Activated CD4-positive, alpha-beta T cell treated with anti-CD3 and anti-CD28 coated beads for 36 hours (primary cell): ENCODE measurements at regions of chr6 and their contacts with region 1.

Region 1: GRCh38 chr6:26322645-26323482 is 42.1 kb upstream of the BTN3A2 start:
- DNase-seq: peak; percentile 77
- ATAC-seq: peak; percentile 66
- H3K4me3 Mint-ChIP-seq: peak overlapping the region; percentile 84
- H3K27ac Mint-ChIP-seq: peak overlapping the region; percentile 93
- H3K4me1 Mint-ChIP-seq: peaks cover 28% of the 10 kb centered on the region
- H3K27me3 Mint-ChIP-seq: peaks cover 5% of the 10 kb centered on the region

Region 2: GRCh38 chr6:25717866-25718740 is 604.8 kb before region 1 on chr6:
- CTCF ChIA-PET with region 1: no interaction called
- POLR2A ChIA-PET with region 1: no interaction called
- intact Hi-C with region 1: no loop called
- DNase-seq: no peak
- ATAC-seq: no peak
- H3K4me3 Mint-ChIP-seq: no peak overlapping the region
- H3K27ac Mint-ChIP-seq: no peak overlapping the region
- H3K4me1 Mint-ChIP-seq: peaks cover 3% of the 10 kb centered on the region
- H3K27me3 Mint-ChIP-seq: peaks cover 13% of the 10 kb centered on the region

Region 3: DNA sequence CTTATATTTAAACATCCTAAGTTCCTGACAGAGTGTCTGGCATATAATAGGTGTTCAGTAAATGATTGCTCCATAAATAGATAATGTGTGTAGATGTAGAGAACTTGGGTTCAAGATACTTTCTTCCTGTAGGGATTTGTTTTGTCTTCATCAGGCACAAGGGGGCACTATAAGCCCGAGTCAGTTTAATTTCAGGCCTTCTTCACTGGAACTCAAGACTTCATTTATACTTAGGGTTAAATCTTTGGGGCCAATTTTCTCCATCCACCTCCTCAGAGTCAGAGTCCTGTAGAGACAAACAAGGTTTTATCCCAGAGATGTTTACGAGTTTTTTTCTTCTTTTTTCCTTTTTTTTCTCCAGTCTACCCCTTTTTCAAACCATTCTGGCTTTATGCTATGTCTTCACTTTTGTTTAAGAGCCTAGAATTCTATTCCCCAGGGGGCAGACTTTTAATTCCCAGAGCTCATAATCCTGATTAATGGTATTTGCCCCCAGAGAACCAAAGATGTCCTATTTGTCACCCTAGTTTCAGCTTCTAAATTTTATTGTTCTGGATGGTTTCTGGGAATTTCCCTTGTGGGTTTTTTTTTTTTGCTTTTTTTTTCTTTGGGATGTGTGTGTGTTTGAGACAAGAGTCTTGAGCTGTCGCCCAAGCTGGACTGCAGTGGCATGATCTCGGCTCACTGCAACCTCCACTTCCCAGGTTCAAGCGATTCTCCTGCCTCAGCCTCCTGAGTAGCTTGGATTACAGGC is 147.3 kb before region 1 on chr6:
- CTCF ChIA-PET with region 1: interaction called, 3 read pairs
- POLR2A ChIA-PET with region 1: no interaction called
- intact Hi-C with region 1: loop called (anchors 5 kb)
- DNase-seq: peak; percentile 69
- ATAC-seq: peak; percentile 14
- H3K4me3 Mint-ChIP-seq: peak overlapping the region; percentile 30
- H3K27ac Mint-ChIP-seq: peak overlapping the region; percentile 80
- H3K4me1 Mint-ChIP-seq: peaks cover 33% of the 10 kb centered on the region
- H3K27me3 Mint-ChIP-seq: no peaks in the 10 kb centered on the region

Region 4: DNA sequence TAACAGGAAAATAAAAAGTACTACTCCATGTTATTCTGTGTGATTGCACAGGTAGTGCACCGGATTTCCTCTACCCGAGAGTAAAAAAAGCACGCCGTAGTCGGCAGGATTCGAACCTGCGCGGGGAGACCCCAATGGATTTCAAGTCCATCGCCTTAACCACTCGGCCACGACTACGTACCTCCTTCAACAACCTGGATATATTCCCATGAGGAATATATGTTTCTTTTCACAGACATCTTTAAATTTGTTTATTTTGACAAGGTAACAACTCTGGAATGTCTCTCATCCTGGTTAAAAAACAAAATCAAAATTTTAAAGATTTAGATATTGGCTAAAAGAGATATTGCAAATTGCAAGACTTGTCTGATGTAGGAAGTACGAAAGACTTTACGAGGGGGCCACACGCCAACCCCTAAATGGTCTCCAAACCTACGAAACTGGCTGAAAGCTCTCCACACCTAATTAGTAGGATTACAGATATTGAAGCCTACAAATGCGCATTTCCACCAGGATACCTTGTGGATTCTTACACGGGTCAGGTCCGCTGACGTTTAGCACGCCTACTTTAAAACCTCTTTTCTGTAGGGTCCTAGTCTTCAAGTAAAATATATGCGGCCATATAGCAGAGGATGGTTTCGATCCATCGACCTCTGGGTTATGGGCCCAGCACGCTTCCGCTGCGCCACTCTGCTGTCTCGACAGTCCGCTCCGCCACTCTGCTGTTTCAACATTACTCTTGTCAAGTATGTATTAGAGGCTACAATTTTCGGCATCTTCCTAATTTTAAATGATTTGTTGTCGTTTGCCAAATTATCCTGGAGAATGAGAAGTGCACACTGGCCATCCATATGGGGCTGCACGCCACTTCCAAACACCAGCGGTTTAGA is 10.1 kb before region 1 on chr6:
- CTCF ChIA-PET with region 1: interaction called, 5 read pairs
- POLR2A ChIA-PET with region 1: interaction called, 5 read pairs
- intact Hi-C with region 1: loop called (anchors 1 kb)
- DNase-seq: peak; percentile 89
- ATAC-seq: peak; percentile 69
- H3K4me3 Mint-ChIP-seq: peak overlapping the region; percentile 88
- H3K27ac Mint-ChIP-seq: peak overlapping the region; percentile 90
- H3K4me1 Mint-ChIP-seq: peaks cover 37% of the 10 kb centered on the region
- H3K27me3 Mint-ChIP-seq: peaks cover 3% of the 10 kb centered on the region

Region 5: GRCh38 chr6:26553635-26554446 is 231.0 kb after region 1 on chr6:
- CTCF ChIA-PET with region 1: interaction called, 11 read pairs
- POLR2A ChIA-PET with region 1: no interaction called
- intact Hi-C with region 1: loop called in 1 of 2 experiments (anchors 2 kb)
- DNase-seq: peak; percentile 89
- ATAC-seq: peak; percentile 58
- H3K4me3 Mint-ChIP-seq: no peak overlapping the region
- H3K27ac Mint-ChIP-seq: no peak overlapping the region
- H3K4me1 Mint-ChIP-seq: peaks cover 27% of the 10 kb centered on the region
- H3K27me3 Mint-ChIP-seq: no peaks in the 10 kb centered on the region

Region 6: GRCh38 chr6:27479319-27480182 is 1156.7 kb after region 1 on chr6:
- CTCF ChIA-PET with region 1: no interaction called
- POLR2A ChIA-PET with region 1: no interaction called
- intact Hi-C with region 1: loop called in 1 of 2 experiments (anchors 2 kb)
- DNase-seq: peak; percentile 89
- ATAC-seq: peak; percentile 69
- H3K4me3 Mint-ChIP-seq: no peak overlapping the region
- H3K27ac Mint-ChIP-seq: no peak overlapping the region
- H3K4me1 Mint-ChIP-seq: peaks cover 6% of the 10 kb centered on the region
- H3K27me3 Mint-ChIP-seq: no peaks in the 10 kb centered on the region